GM10248 (cell line): ENCODE measurements at regions of chr4 and their contacts with region 1.

Region 1: DNA sequence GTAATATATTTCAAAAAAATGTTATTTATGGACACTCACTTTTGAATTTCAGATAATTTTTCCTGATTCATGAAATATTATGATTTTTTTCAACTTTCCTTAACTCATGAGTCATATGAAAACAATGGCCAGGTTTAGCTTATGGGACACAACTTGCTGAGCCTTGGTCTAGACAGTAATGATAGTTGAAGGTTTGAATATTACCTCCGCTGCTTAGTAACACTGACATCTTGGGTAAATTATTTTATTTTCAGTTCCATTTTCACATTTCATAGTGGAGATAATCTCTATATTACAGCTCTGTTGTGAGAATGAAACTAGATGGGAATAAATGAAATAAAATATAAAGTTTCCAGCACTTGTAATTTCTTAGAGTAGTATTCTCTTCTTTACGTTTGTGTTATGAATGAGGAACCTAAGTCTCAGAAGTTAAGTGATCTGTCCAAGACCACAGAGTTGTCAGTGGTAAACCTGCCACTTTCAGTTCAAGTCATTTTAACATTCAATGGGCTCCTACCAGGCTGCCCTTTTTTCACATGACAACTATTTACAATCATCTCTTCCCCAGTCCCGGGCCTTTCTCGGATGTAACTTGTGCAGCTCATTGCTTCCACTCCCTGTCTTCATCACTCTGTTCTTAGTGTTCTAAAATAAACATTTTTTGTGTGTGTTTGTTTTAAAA is 46.8 kb upstream of the GC start:
- DNase-seq: no peak
- CTCF ChIP-seq: no peak

Region 2: DNA sequence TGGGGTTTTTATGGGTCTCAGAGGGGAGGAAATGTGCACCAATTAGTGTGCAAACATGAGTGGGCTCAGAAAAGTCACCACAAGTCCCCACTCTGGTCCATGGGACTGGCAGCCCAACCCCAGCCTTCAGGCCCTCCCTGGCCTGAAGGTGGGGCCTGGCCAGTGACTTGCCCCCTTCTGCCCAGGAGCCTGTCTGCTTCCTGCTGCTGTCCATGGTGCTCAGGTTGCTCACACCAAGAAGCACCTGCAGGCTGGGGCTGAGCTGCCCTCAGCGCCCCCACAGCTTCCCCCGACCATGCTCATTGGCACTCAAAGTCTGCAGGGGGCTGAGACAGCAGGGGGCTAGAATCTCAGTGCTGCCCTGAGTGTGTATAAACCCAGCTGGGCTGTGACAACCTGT is 16.2 kb before region 1 on chr4:
- CTCF ChIA-PET with region 1: interaction called, 10 read pairs
- POLR2A ChIA-PET with region 1: no interaction called
- DNase-seq: no peak
- CTCF ChIP-seq: no peak

Region 3: DNA sequence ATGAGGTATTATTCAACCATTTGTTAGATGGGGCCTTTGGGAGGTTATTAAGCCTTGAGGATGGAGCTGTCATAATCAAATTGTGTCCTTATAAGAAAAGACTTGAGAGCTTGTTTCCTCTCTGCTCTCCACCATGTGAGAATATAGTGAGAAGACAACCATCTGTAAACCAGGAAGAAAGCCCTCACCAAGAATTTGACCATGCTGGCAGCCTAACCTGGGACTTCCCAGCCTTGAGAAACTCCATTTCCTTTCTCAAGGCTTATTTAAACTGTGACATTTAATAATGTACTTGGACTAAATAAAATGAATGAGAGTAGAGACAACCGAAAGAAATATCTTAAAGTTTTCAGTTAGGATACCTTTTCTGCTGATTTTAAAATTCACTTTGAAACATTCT is 37.0 kb after region 1 on chr4:
- CTCF ChIA-PET with region 1: no interaction called
- POLR2A ChIA-PET with region 1: no interaction called
- DNase-seq: no peak
- CTCF ChIP-seq: no peak